ENCODE measurements at regions of chr5 and their contacts with region 1.

Region 1: GRCh38 chr5:149960272-149961185 is at the start of gene SLC26A2:
- DNase-seq: peak; percentile 97 to 98 (median 98)
- ATAC-seq: peak; percentile 99
- H3K4me3 ChIP-seq: peak within 1 kb of the TSS; percentile 66
- H3K27ac ChIP-seq: peak within 1 kb of the TSS; percentile 84
- H3K4me1 ChIP-seq: peaks cover 14 to 21% of the 10 kb centered on the region in 2 experiments; a peak in 4 of 5 replicates
- H3K27me3 ChIP-seq: no peaks in the 10 kb centered on the region
- CTCF ChIP-seq: no peak
- EP300 ChIP-seq: no peak
- POLR2A ChIP-seq: peak; percentile 92
- RAD21 ChIP-seq: no peak
- polyA plus RNA-seq, gene SLC26A2: 1.1 to 2.0 TPM

Region 2: GRCh38 chr5:149852641-149853330 is 107.7 kb before region 1 on chr5:
- CTCF ChIA-PET with region 1: interaction called, 9 read pairs
- POLR2A ChIA-PET with region 1: interaction called, 5 read pairs
- in situ Hi-C with region 1: loop called (anchors 10 kb)
- intact Hi-C with region 1: loop called (anchors 5 kb)
- DNase-seq: peak; percentile 68 to 82 (median 71)
- ATAC-seq: peak; percentile 96
- H3K4me3 ChIP-seq: no peak overlapping the region
- H3K27ac ChIP-seq: no peak overlapping the region; the same call in 2 of the 3 replicates
- H3K4me1 ChIP-seq: no peaks in the 10 kb centered on the region
- H3K27me3 ChIP-seq: no peaks in the 10 kb centered on the region
- CTCF ChIP-seq: peak; percentile 81 to 94 (median 87)
- EP300 ChIP-seq: no peak
- POLR2A ChIP-seq: no peak
- RAD21 ChIP-seq: peak; percentile 69 to 81

Region 3: DNA sequence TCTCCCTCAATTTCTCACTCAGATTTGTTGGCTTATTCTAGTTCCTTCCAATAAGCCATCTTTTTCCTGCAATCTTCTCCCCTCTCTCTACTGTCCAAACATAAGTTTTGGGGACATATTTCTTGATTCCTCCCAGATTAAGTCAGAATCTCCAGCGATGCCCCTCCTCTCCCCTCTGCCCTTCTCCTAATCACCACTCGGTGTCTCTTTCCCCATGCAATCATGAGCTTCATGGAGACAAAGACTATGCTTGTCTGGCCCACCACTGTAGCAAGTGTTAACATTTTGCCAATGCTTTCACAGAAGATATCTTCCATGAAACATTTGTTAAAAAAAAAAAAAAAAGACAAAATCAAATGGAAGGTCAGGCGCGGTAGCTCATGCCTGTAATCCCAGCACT is 58.4 kb before region 1 on chr5:
- CTCF ChIA-PET with region 1: interaction called, 3 read pairs
- POLR2A ChIA-PET with region 1: no interaction called
- in situ Hi-C with region 1: no loop called
- intact Hi-C with region 1: loop called (anchors 1 kb)
- DNase-seq: peak in 1 of 4 experiments; percentile 32
- ATAC-seq: peak; percentile 83
- H3K4me3 ChIP-seq: no peak overlapping the region
- H3K27ac ChIP-seq: no peak overlapping the region
- H3K4me1 ChIP-seq: peaks cover 4 to 7% of the 10 kb centered on the region in 2 experiments; a peak in 3 of 5 replicates
- H3K27me3 ChIP-seq: no peaks in the 10 kb centered on the region
- CTCF ChIP-seq: peak; percentile 29 to 55 (median 47); a peak in 5 of 6 replicates
- EP300 ChIP-seq: no peak
- POLR2A ChIP-seq: no peak
- RAD21 ChIP-seq: peak; percentile 41 to 67

Region 4: GRCh38 chr5:149915392-149916260 is 44.9 kb before region 1 on chr5:
- CTCF ChIA-PET with region 1: no interaction called
- POLR2A ChIA-PET with region 1: no interaction called
- in situ Hi-C with region 1: no loop called
- intact Hi-C with region 1: no loop called
- DNase-seq: no peak
- ATAC-seq: 0 out of 3 replicates have a peak, but pooled peaks have one; percentile 15
- H3K4me3 ChIP-seq: no peak overlapping the region
- H3K27ac ChIP-seq: no peak overlapping the region
- H3K4me1 ChIP-seq: peaks cover 3 to 25% of the 10 kb centered on the region in 2 experiments; a peak in 4 of 5 replicates
- H3K27me3 ChIP-seq: no peaks in the 10 kb centered on the region
- CTCF ChIP-seq: no peak
- EP300 ChIP-seq: no peak
- POLR2A ChIP-seq: no peak
- RAD21 ChIP-seq: no peak

Region 5: DNA sequence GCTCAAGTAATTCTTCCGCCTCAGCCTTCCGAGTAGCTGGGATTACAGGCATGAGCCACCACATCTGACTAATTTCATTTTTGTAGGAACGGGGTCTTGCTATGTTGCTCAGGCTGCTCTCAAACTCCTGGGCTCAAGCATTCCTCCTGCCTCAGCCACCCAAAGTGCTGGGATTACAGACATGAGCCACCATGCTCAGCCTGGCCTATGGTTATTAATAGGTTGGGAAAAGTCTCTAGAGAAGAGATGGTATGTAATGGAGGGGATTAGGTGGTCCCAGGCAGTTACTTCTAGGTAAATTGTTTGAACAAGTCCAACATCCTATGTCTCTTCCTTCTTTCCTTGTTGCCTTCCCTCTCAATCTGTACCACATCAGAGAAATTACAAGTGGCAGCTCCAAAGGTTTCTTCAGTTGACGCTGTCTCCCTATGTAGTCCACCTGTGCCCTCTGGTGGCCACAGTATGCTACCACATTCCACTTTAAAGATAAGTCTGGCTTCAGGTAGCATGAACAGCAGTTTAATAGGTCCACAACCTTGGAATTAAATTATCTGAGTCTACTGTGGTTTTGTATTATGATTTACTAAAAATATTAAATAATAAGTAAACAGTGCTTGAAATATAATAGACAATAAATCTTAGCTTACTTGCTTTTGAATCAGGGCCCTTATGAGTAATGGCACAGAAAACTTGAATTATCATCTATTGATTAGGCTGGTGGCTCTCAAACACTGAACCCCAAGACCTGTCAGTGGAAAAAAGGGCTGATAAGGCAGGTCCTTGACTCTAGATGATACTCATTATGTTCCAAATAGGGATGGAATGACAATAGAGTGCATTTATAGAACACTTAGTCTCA is 30.2 kb after region 1 on chr5:
- CTCF ChIA-PET with region 1: no interaction called
- POLR2A ChIA-PET with region 1: interaction called, 3 read pairs
- in situ Hi-C with region 1: no loop called
- intact Hi-C with region 1: loop called (anchors 2 kb)
- DNase-seq: peak; percentile 69 to 83 (median 73)
- ATAC-seq: peak; percentile 92
- H3K4me3 ChIP-seq: no peak overlapping the region
- H3K27ac ChIP-seq: no peak overlapping the region
- H3K4me1 ChIP-seq: no peaks in the 10 kb centered on the region; a peak in 2 of 5 replicates
- H3K27me3 ChIP-seq: no peaks in the 10 kb centered on the region
- CTCF ChIP-seq: peak; percentile 87 to 97 (median 91)
- EP300 ChIP-seq: no peak
- POLR2A ChIP-seq: no peak
- RAD21 ChIP-seq: peak; percentile 94 to 97

Region 6: DNA sequence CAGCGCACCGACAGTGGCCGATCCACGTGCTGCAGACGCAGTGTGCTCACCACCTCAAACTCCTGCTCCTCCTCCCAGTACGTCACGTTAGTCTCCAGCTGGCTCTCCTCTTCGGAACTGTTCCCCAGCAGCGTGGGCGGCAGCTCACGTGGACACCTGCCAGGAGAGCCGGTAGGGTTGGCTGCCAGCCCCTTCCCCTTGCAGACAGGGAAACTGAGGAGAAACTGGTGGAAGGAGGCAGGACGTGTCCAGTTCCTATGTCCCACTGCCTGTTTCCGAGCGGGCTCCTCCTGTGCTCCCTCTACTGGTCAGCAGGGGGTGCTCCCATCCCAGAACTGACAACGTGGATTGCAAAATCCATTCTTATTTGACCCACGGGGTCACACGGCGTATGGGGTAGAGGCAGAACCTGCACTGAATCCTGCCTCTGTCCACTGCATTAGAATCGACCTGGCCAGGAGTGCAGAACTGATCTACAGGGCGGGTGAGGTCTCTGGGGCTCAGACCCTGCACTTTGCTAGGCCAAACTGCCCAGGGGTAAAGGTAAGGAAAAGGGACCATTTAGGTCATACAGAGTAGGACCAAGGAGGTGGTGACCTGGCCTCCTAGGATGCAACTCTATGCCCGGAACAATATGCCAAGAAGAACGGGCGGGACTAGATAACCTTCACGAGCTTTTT is 169.4 kb after region 1 on chr5:
- CTCF ChIA-PET with region 1: no interaction called
- POLR2A ChIA-PET with region 1: no interaction called
- in situ Hi-C with region 1: no loop called
- intact Hi-C with region 1: no loop called
- DNase-seq: peak; percentile 82 to 91 (median 89)
- ATAC-seq: peak; percentile 93
- H3K4me3 ChIP-seq: peak overlapping the region; percentile 14; the same call in 1 of the 2 replicates
- H3K27ac ChIP-seq: no peak overlapping the region
- H3K4me1 ChIP-seq: peaks cover 8 to 11% of the 10 kb centered on the region in 2 experiments; a peak in 4 of 5 replicates
- H3K27me3 ChIP-seq: peaks cover 5 to 20% of the 10 kb centered on the region in 2 experiments; a peak in 4 of 5 replicates
- CTCF ChIP-seq: peak; percentile 87 to 98 (median 97)
- EP300 ChIP-seq: no peak
- POLR2A ChIP-seq: no peak
- RAD21 ChIP-seq: peak; percentile 97

Region 7: GRCh38 chr5:150350524-150351344 is 390.2 kb after region 1 on chr5:
- CTCF ChIA-PET with region 1: no interaction called
- POLR2A ChIA-PET with region 1: no interaction called
- in situ Hi-C with region 1: no loop called
- intact Hi-C with region 1: no loop called
- DNase-seq: peak; percentile 80 to 84 (median 82)
- ATAC-seq: peak; percentile 99
- H3K4me3 ChIP-seq: no peak overlapping the region
- H3K27ac ChIP-seq: no peak overlapping the region
- H3K4me1 ChIP-seq: no peaks in the 10 kb centered on the region; a peak in 1 of 5 replicates
- H3K27me3 ChIP-seq: peaks cover 9 to 18% of the 10 kb centered on the region in 2 experiments; a peak in 4 of 5 replicates
- CTCF ChIP-seq: peak; percentile 86 to 90 (median 87)
- EP300 ChIP-seq: no peak
- POLR2A ChIP-seq: no peak
- RAD21 ChIP-seq: peak; percentile 94 to 96

Measured in K562 (cell line).